Body of pancreas (tissue), 4 donors: ENCODE measurements at regions of chr12 and their contacts with region 1.

Region 1: GRCh38 chr12:91349476-91349875 is 166.9 kb upstream of the DCN start:
- DNase-seq: no peak
- ATAC-seq: no peak
- H3K4me3 ChIP-seq: no peak overlapping the region
- H3K27ac ChIP-seq: no peak overlapping the region
- H3K4me1 ChIP-seq: no peaks in the 10 kb centered on the region
- H3K27me3 ChIP-seq: no peaks in the 10 kb centered on the region
- CTCF ChIP-seq: no peak
- POLR2A ChIP-seq: no peak

Region 2: GRCh38 chr12:90627180-90627896 is 722.1 kb before region 1 on chr12:
- intact Hi-C with region 1: no loop called
- DNase-seq: no peak
- ATAC-seq: no peak
- H3K4me3 ChIP-seq: no peak overlapping the region
- H3K27ac ChIP-seq: no peak overlapping the region
- H3K4me1 ChIP-seq: no peaks in the 10 kb centered on the region
- H3K27me3 ChIP-seq: no peaks in the 10 kb centered on the region
- CTCF ChIP-seq: no peak
- POLR2A ChIP-seq: no peak

Region 3: GRCh38 chr12:91127751-91128150 is 221.7 kb before region 1 on chr12:
- intact Hi-C with region 1: no loop called
- DNase-seq: no peak
- ATAC-seq: no peak
- H3K4me3 ChIP-seq: no peak overlapping the region
- H3K27ac ChIP-seq: no peak overlapping the region
- H3K4me1 ChIP-seq: no peaks in the 10 kb centered on the region
- H3K27me3 ChIP-seq: no peaks in the 10 kb centered on the region
- CTCF ChIP-seq: no peak
- POLR2A ChIP-seq: no peak

Region 4: GRCh38 chr12:91178139-91178561 is 171.3 kb before region 1 on chr12:
- intact Hi-C with region 1: loop called (anchors 10 kb)
- DNase-seq: no peak
- ATAC-seq: peak; percentile 63
- H3K4me3 ChIP-seq: no peak overlapping the region
- H3K27ac ChIP-seq: peak overlapping the region in 1 of 4 donors; percentile 7
- H3K4me1 ChIP-seq: no peaks in the 10 kb centered on the region
- H3K27me3 ChIP-seq: no peaks in the 10 kb centered on the region
- CTCF ChIP-seq: peak in 6 of 7 experiments; percentile 38 to 68 (median 64)
- POLR2A ChIP-seq: no peak

Region 5: GRCh38 chr12:91460469-91460868 is 111.0 kb after region 1 on chr12:
- intact Hi-C with region 1: no loop called
- DNase-seq: no peak
- ATAC-seq: no peak
- H3K4me3 ChIP-seq: no peak overlapping the region
- H3K27ac ChIP-seq: no peak overlapping the region
- H3K4me1 ChIP-seq: no peaks in the 10 kb centered on the region
- H3K27me3 ChIP-seq: no peaks in the 10 kb centered on the region
- CTCF ChIP-seq: no peak
- POLR2A ChIP-seq: no peak

Region 6: GRCh38 chr12:92007787-92008186 is 658.3 kb after region 1 on chr12:
- intact Hi-C with region 1: no loop called
- DNase-seq: no peak
- ATAC-seq: no peak
- H3K4me3 ChIP-seq: no peak overlapping the region
- H3K27ac ChIP-seq: no peak overlapping the region
- H3K4me1 ChIP-seq: peaks cover 10% of the 10 kb centered on the region
- H3K27me3 ChIP-seq: no peaks in the 10 kb centered on the region
- CTCF ChIP-seq: no peak
- POLR2A ChIP-seq: no peak